Activated naive CD8-positive, alpha-beta T cell treated with anti-CD3 and anti-CD28 coated beads, Interleukin-2, amount 10 ng/mL, durations not matched to agents 7 days and 5 days (primary cell): ENCODE measurements at regions of chr3 and their contacts with region 1.

Region 1: GRCh38 chr3:41198950-41199865 is at the start of gene CTNNB1:
- DNase-seq: peak; percentile 93
- ATAC-seq: peak; percentile 84
- H3K4me3 Mint-ChIP-seq: peak within 1 kb of the TSS; percentile 95
- H3K27ac Mint-ChIP-seq: peak within 1 kb of the TSS; percentile 97
- H3K4me1 Mint-ChIP-seq: peaks cover 19% of the 10 kb centered on the region
- H3K27me3 Mint-ChIP-seq: peaks cover 26% of the 10 kb centered on the region
- total RNA-seq, gene CTNNB1: 135 to 139 TPM

Region 2: DNA sequence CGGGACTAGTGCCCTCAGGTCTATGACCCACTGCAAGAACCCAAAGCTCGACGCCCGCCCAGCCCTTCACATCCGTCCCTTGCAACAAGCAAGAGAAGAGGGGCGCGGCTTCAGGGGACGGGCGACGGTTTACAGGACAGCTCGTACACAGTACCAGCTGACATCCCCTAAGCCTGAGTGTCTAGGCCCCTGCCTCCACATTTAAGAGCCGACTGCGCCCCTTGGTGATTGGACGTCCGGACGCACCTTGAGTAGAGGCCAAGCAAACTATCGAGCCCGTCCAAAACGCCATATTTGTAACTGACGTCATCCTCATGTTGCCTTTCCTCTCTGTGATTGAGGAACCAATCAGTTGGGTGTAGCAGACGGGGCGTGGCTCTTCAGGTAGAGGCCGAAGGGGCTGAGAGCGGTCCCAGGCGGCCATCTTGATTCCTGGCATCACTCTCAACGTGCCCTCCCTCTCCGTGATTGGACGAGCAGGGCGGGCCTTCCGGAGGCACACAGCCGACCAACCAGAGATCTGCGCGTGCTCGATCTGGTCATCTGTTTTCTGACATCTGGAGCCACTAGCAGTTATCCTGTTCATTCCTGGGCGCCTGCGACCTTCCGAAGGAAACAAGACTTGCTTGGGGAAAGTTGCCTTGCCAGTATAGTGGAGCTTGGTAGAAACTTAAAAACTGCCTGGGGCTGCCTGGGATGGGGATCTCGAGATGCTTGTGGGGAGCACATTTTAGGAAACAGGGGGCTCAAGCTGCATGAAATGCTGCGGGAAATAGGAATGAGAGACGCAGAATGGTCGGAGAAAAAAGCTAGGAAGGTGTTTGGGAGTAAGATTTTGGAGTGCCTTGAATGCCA is 746.1 kb before region 1 on chr3:
- POLR2A ChIA-PET with region 1: interaction called, 13 read pairs
- DNase-seq: peak; percentile 88
- ATAC-seq: peak; percentile 92
- H3K4me3 Mint-ChIP-seq: peak overlapping the region; percentile 86
- H3K27ac Mint-ChIP-seq: peak overlapping the region; percentile 98
- H3K4me1 Mint-ChIP-seq: peaks cover 27% of the 10 kb centered on the region
- H3K27me3 Mint-ChIP-seq: no peaks in the 10 kb centered on the region

Region 3: DNA sequence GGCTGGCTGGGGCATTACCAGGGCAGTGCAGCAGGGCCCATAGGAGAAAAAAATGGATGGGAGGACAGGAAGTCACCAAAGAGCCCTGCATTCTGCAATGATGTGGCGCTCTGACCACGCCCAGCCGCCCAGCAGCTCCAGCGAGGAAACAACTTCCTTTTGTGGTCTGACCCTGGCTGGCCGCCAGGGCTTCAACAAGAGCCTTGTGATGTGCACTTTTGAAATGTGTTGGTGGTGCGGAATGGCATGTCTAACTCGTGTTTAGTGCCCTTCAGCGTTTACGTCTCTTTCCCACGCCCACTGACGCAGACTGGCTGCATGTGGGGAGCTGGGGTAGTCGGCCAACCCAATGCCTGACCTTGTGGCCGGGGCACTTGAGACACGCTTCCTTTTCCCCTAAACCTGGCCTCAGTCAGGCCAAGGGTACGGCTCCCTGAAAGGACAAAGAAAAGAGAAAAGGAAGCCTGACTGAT is 81.8 kb before region 1 on chr3:
- POLR2A ChIA-PET with region 1: interaction called, 24 read pairs
- DNase-seq: peak; percentile 81
- ATAC-seq: peak; percentile 94
- H3K4me3 Mint-ChIP-seq: peak overlapping the region; percentile 41
- H3K27ac Mint-ChIP-seq: peak overlapping the region; percentile 79
- H3K4me1 Mint-ChIP-seq: peaks cover 14% of the 10 kb centered on the region
- H3K27me3 Mint-ChIP-seq: peaks cover 9% of the 10 kb centered on the region

Region 4: GRCh38 chr3:41234823-41235721 is 35.9 kb after region 1 on chr3:
- POLR2A ChIA-PET with region 1: interaction called, 15 read pairs
- DNase-seq: no peak
- ATAC-seq: no peak
- H3K4me3 Mint-ChIP-seq: no peak overlapping the region
- H3K27ac Mint-ChIP-seq: no peak overlapping the region
- H3K4me1 Mint-ChIP-seq: peaks cover 4% of the 10 kb centered on the region
- H3K27me3 Mint-ChIP-seq: no peaks in the 10 kb centered on the region

Region 5: GRCh38 chr3:41248525-41248924 is 49.3 kb after region 1 on chr3:
- POLR2A ChIA-PET with region 1: no interaction called
- DNase-seq: no peak
- ATAC-seq: no peak
- H3K4me3 Mint-ChIP-seq: no peak overlapping the region
- H3K27ac Mint-ChIP-seq: no peak overlapping the region
- H3K4me1 Mint-ChIP-seq: no peaks in the 10 kb centered on the region
- H3K27me3 Mint-ChIP-seq: no peaks in the 10 kb centered on the region